CD4-positive, alpha-beta memory T cell (primary cell): ENCODE measurements at regions of chr1 and their contacts with region 1.

Region 1: GRCh38 chr1:159077120-159077961 is 775 bp upstream of the AIM2 start:
- DNase-seq: peak; percentile 86 to 95 (median 88)
- H3K4me3 ChIP-seq: peak overlapping the region; percentile 61 to 69
- H3K4me3 Mint-ChIP-seq: peak overlapping the region; percentile 75 to 86 (median 84)
- H3K27ac ChIP-seq: peak overlapping the region; percentile 85
- H3K27ac Mint-ChIP-seq: peak overlapping the region; percentile 89 to 99 (median 95)
- H3K4me1 ChIP-seq: peaks cover 47% of the 10 kb centered on the region
- H3K4me1 Mint-ChIP-seq: peaks cover 23 to 40% (median 27%) of the 10 kb centered on the region in 4 donors
- H3K27me3 ChIP-seq: no peaks in the 10 kb centered on the region
- H3K27me3 Mint-ChIP-seq: no peaks in the 10 kb centered on the region

Region 2: GRCh38 chr1:158203693-158204457 is 873.5 kb before region 1 on chr1:
- CTCF ChIA-PET with region 1: interaction called, 120 read pairs
- POLR2A ChIA-PET with region 1: interaction called, 3 read pairs
- intact Hi-C with region 1: loop called (anchors 1 kb)
- DNase-seq: peak in 4 of 5 donors; percentile 31 to 53 (median 36)
- H3K4me3 ChIP-seq: no peak overlapping the region
- H3K4me3 Mint-ChIP-seq: peak overlapping the region in 1 of 8 donors; percentile 43
- H3K27ac ChIP-seq: no peak overlapping the region
- H3K27ac Mint-ChIP-seq: no peak overlapping the region
- H3K4me1 ChIP-seq: peaks cover 10% of the 10 kb centered on the region
- H3K4me1 Mint-ChIP-seq: peaks cover 7 to 11% (median 9%) of the 10 kb centered on the region in 4 donors
- H3K27me3 ChIP-seq: no peaks in the 10 kb centered on the region
- H3K27me3 Mint-ChIP-seq: peaks cover 13 to 19% of the 10 kb centered on the region in 2 donors

Region 3: DNA sequence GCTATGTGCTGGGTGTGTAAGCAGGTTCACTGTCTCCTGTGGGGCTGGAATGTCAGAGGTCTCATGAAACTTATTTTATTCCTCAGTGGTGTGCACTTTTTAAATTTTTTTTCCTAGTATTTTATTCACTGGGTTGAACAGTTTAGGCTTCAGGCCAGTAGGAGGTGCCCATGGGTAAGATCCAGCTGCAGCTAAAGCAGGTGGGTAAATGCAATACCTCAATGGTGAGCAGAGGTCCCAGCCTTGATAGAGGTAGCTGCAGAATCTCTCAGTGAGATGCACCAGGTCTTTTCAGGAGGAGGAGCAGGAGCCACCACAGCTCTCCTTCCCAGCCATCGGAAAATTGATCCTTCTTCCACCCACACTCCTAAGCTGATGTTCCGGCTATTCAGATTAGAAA is 283.7 kb before region 1 on chr1:
- CTCF ChIA-PET with region 1: interaction called, 6 read pairs
- POLR2A ChIA-PET with region 1: interaction called, 5 read pairs
- intact Hi-C with region 1: loop called (anchors 5 kb)
- DNase-seq: peak in 4 of 5 donors; percentile 26 to 39 (median 33)
- H3K4me3 ChIP-seq: no peak overlapping the region
- H3K4me3 Mint-ChIP-seq: no peak overlapping the region
- H3K27ac ChIP-seq: no peak overlapping the region
- H3K27ac Mint-ChIP-seq: peak overlapping the region in 1 of 7 donors; percentile 37
- H3K4me1 ChIP-seq: no peaks in the 10 kb centered on the region
- H3K4me1 Mint-ChIP-seq: no peaks in the 10 kb centered on the region
- H3K27me3 ChIP-seq: no peaks in the 10 kb centered on the region
- H3K27me3 Mint-ChIP-seq: peaks cover 0 to 3% of the 10 kb centered on the region in 2 donors

Region 4: DNA sequence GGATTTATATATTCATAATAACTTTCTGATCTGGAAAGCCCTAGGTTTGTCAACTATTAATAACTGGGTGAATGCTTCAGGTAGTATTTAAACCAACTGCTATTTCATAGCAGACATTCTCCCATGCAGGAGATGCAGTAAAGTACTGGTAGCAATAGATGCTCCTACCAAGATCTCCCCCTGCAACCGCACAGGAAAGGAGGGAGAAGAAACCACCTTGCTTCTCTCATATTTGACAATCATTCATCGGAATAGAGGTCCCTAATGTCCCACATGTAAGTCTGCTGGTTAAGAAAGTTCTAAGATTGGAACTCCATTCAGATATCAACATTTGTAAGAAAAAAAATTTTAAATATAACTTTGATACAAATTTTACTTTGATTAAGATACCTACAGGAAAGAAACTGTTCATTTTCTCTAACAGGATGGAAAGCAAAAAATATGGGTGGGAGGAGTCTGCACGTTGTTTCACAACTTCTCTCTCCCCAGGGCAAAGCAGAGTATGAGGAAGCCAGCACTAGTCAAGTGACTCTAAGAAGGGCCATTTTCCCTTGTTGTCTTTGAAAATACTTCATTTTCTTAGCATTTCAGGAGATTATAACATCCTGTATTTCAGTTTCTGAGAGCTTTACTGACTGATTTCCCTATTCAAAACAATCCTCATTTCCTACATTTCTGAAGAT is 146.1 kb before region 1 on chr1 and contains the start of gene PYHIN1:
- CTCF ChIA-PET with region 1: no interaction called
- POLR2A ChIA-PET with region 1: interaction called, 9 read pairs
- intact Hi-C with region 1: loop called (anchors 5 kb)
- DNase-seq: peak; percentile 52 to 67 (median 57)
- H3K4me3 ChIP-seq: peak within 1 kb of the TSS; percentile 50 to 67
- H3K4me3 Mint-ChIP-seq: peak within 1 kb of the TSS; percentile 97 to 100 (median 99)
- H3K27ac ChIP-seq: peak within 1 kb of the TSS; percentile 62
- H3K27ac Mint-ChIP-seq: peak within 1 kb of the TSS; percentile 83 to 98 (median 96)
- H3K4me1 ChIP-seq: peaks cover 40% of the 10 kb centered on the region
- H3K4me1 Mint-ChIP-seq: peaks cover 31 to 52% (median 37%) of the 10 kb centered on the region in 4 donors
- H3K27me3 ChIP-seq: no peaks in the 10 kb centered on the region
- H3K27me3 Mint-ChIP-seq: no peaks in the 10 kb centered on the region
- total RNA-seq, gene PYHIN1: 83.6 to 93.8 TPM

Region 5: DNA sequence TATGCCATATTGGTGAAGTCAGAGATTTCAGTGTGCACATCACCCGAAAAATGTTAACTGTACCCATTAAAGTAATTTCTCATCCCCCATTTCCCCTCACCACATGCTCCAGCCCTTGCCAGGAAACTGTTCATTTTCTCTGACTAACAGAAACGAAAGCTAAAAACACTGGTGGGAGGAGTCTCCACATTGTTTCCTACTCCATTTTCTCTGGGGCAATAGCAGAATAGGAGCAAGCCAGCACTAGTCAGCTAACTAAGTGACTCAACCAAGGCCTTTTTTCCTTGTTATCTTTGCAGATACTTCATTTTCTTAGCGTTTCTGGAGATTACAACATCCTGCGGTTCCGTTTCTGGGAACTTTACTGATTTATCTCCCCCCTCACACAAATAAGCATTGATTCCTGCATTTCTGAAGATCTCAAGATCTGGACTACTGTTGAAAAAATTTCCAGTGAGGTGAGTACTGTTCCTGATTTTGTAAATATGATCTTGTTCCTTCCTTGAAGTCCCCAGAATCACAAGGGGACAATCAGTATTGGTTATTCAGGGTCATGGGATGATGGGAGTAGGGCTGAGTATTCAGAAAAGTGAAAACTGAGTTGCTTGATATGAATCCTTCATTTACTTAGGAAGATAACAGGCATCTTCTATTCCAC is 67.5 kb before region 1 on chr1 and contains the start of gene IFI16:
- CTCF ChIA-PET with region 1: interaction called, 18 read pairs
- POLR2A ChIA-PET with region 1: interaction called, 39 read pairs
- intact Hi-C with region 1: loop called (anchors 1 kb)
- DNase-seq: peak; percentile 70 to 85 (median 77)
- H3K4me3 ChIP-seq: peak within 1 kb of the TSS; percentile 54 to 97
- H3K4me3 Mint-ChIP-seq: peak within 1 kb of the TSS; percentile 89 to 99 (median 97)
- H3K27ac ChIP-seq: peak within 1 kb of the TSS; percentile 88
- H3K27ac Mint-ChIP-seq: peak within 1 kb of the TSS; percentile 87 to 95 (median 93)
- H3K4me1 ChIP-seq: peaks cover 36% of the 10 kb centered on the region
- H3K4me1 Mint-ChIP-seq: peaks cover 40 to 71% (median 46%) of the 10 kb centered on the region in 4 donors
- H3K27me3 ChIP-seq: no peaks in the 10 kb centered on the region
- H3K27me3 Mint-ChIP-seq: no peaks in the 10 kb centered on the region
- total RNA-seq, gene IFI16: 160 to 162 TPM

Region 6: DNA sequence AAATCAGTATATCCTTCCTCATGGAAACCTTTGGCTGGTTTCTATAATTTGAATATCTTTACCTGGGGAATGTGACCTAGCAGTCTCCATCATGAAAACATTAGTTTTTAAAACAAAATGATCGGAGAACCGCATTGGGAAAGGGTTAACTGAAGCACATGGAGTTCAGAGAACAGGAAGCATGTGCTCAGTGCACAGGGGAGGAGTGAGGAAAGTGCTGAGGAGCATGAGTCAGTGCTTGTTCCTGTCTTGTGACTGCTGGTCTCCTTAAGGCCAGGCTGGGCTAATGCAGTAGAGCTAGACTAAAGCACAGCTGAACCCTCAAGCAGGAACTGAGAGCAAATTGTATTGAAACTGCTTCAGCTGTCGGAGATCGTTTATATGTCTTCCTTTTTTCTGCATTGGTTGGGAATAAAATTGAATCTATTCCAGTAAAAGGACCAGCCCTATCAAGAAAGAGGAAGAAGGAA is 61.9 kb before region 1 on chr1:
- CTCF ChIA-PET with region 1: interaction called, 18 read pairs
- POLR2A ChIA-PET with region 1: interaction called, 39 read pairs
- intact Hi-C with region 1: loop called (anchors 2 kb)
- DNase-seq: peak; percentile 53 to 89 (median 63)
- H3K4me3 ChIP-seq: peak overlapping the region in 1 of 2 donors; percentile 26
- H3K4me3 Mint-ChIP-seq: peak overlapping the region; percentile 71 to 95 (median 84)
- H3K27ac ChIP-seq: peak overlapping the region; percentile 47
- H3K27ac Mint-ChIP-seq: peak overlapping the region; percentile 83 to 94 (median 91)
- H3K4me1 ChIP-seq: peaks cover 67% of the 10 kb centered on the region
- H3K4me1 Mint-ChIP-seq: peaks cover 55 to 79% (median 63%) of the 10 kb centered on the region in 4 donors
- H3K27me3 ChIP-seq: no peaks in the 10 kb centered on the region
- H3K27me3 Mint-ChIP-seq: no peaks in the 10 kb centered on the region

Region 7: GRCh38 chr1:159089184-159089791 is 11.9 kb after region 1 on chr1:
- CTCF ChIA-PET with region 1: interaction called, 44 read pairs
- POLR2A ChIA-PET with region 1: interaction called, 3 read pairs
- intact Hi-C with region 1: loop called (anchors 1 kb)
- DNase-seq: peak in 4 of 5 donors; percentile 39 to 57 (median 40)
- H3K4me3 ChIP-seq: no peak overlapping the region
- H3K4me3 Mint-ChIP-seq: no peak overlapping the region
- H3K27ac ChIP-seq: no peak overlapping the region
- H3K27ac Mint-ChIP-seq: no peak overlapping the region
- H3K4me1 ChIP-seq: peaks cover 7% of the 10 kb centered on the region
- H3K4me1 Mint-ChIP-seq: peaks cover 6 to 32% (median 22%) of the 10 kb centered on the region in 4 donors
- H3K27me3 ChIP-seq: no peaks in the 10 kb centered on the region
- H3K27me3 Mint-ChIP-seq: no peaks in the 10 kb centered on the region